A549 (cell line): ENCODE measurements at regions of chr5 and their contacts with region 1.

Region 1: GRCh38 chr5:135154197-135154596 is 120.2 kb upstream of the PITX1 start:
- DNase-seq: no peak
- ATAC-seq: peak; percentile 56 to 65; a peak in 4 of 6 replicates
- H3K4me3 ChIP-seq: no peak overlapping the region
- H3K27ac ChIP-seq: 0 out of 6 replicates have a peak overlapping the region, but pooled peaks of 1 of the 2 experiments have one; percentile 4
- H3K4me1 ChIP-seq: peaks cover 6% of the 10 kb centered on the region; the same call in 1 of the 3 replicates
- CTCF ChIP-seq: no peak
- EP300 ChIP-seq: no peak
- POLR2A ChIP-seq: no peak
- RAD21 ChIP-seq: no peak

Region 2: DNA sequence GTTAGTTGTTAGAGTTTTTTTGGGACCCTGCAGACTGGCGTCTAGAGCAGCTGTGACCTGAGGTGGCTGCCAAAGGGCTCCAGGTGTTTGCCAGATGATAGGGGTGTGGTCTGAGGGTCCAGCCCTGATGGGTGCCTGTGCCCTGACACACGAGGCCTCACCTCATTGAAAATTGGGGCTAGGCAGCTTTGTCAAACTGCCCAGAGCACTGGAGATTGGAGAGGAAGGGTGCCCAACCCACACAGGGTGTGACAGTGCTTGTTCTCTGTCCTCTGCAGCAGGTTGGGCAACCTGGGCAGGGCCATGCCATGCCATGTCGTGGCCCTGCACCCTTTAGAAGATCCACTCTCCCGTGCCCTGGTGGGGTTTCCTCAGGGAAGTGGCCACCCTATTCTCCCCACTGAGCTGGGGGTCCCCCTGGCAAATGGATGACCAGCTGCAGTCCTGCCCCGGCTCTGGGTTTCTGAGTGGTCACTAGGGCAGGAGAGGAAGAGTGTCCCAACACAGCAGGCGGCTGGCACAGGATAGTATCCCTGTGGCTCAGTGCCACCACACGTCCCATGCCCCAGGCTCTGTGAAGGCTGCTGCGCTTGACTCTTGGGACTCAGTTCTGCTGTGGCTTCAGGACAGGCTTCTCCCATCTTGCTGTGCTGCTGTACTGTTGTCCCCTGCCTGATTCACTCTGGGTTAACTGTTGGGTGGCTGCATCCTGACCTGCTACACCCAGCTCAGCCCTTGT is 19.4 kb before region 1 on chr5:
- CTCF ChIA-PET with region 1: no interaction called
- POLR2A ChIA-PET with region 1: no interaction called
- DNase-seq: no peak
- ATAC-seq: no peak
- H3K4me3 ChIP-seq: no peak overlapping the region
- H3K27ac ChIP-seq: peak overlapping the region; percentile 52 to 84
- H3K4me1 ChIP-seq: peaks cover 52% of the 10 kb centered on the region
- CTCF ChIP-seq: no peak
- EP300 ChIP-seq: no peak
- POLR2A ChIP-seq: no peak
- RAD21 ChIP-seq: no peak

Region 3: GRCh38 chr5:135167634-135168033 is 13.4 kb after region 1 on chr5:
- CTCF ChIA-PET with region 1: interaction called, 10 read pairs
- POLR2A ChIA-PET with region 1: no interaction called
- DNase-seq: no peak
- ATAC-seq: no peak
- H3K4me3 ChIP-seq: no peak overlapping the region
- H3K27ac ChIP-seq: no peak overlapping the region
- H3K4me1 ChIP-seq: no peaks in the 10 kb centered on the region
- CTCF ChIP-seq: no peak
- EP300 ChIP-seq: no peak
- POLR2A ChIP-seq: no peak
- RAD21 ChIP-seq: no peak